ENCODE measurements at regions of chrX and their contacts with region 1.

Region 1: GRCh38 chrX:68807818-68808217 is 21.0 kb upstream of the EFNB1 start:
- DNase-seq: no peak
- ATAC-seq: peak; percentile 75

Region 2: DNA sequence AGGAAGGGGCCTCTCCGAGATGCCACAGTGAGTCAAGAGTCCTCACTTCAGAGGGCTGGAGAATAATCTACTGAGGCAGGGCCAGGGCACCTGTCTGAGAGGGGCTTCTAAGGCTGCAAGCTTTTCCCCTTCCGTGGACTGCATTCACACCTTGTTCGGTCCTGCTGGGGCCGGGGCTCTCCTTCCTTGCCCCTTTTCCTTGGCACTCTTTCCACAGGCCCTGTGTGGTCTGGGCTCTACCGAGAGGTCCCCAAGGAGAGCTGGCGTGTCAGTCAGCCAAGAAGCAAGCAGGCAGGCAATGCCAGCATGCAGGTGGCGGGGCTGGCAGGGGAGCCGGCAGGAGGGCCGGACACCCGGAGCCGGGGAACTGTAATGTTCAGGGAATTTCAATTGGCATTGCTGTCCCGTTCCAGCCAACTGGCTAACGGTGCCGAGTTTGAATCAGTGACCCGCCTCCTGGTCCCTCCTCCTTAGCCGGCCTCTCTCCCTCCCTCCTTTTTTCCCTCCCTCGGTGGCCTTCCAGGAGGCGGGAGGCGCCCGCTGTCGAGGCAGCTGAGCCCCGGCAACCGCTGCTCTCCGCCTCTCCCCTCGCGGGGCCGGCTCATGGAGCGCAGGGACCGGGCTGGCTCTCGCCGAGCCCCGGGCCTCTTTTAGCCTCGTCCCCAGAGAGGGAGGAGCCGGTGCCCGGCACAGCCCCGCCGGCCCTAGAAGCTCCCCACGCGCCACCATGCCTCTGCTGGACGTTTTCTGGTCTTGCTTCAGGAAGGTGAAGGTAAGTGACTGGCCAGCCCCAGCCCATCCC is 160.5 kb before region 1 on chrX and contains the start of gene STARD8:
- intact Hi-C with region 1: no loop called
- DNase-seq: peak; percentile 54
- ATAC-seq: peak; percentile 87
- total RNA-seq, gene STARD8: 10.5 TPM

Region 3: GRCh38 chrX:68732906-68733493 is 74.8 kb before region 1 on chrX:
- intact Hi-C with region 1: loop called (anchors 2 kb)
- DNase-seq: peak; percentile 79
- ATAC-seq: peak; percentile 82

Measured in left ventricle myocardium superior (tissue), 1 donor.